Ascending aorta (tissue), 2 donors: ENCODE measurements at regions of chr3 and their contacts with region 1.

Region 1: DNA sequence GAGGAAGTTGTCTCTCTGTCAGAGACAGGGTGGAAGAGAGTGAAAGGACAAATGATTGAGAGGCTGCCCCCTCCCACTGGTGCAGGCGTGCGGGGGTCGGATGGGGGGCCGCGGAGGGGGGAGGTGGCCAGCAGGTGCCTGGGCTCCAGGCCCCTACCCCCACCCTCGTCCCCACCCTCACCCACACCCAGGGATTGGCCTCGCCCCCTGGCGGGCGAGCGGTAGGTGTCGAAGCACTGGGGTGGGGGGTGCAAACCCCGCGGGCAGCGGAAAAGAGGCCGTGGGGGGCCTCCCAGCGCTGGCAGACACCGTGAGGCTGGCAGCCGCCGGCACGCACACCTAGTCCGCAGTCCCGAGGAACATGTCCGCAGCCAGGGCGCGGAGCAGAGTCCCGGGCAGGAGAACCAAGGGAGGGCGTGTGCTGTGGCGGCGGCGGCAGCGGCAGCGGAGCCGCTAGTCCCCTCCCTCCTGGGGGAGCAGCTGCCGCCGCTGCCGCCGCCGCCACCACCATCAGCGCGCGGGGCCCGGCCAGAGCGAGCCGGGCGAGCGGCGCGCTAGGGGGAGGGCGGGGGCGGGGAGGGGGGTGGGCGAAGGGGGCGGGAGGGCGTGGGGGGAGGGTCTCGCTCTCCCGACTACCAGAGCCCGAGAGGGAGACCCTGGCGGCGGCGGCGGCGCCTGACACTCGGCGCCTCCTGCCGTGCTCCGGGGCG is at the start of gene KAT2B:
- DNase-seq: peak in 1 of 2 donors; percentile 87
- H3K4me3 ChIP-seq: peak within 1 kb of the TSS; percentile 74 to 88
- H3K27ac ChIP-seq: peak within 1 kb of the TSS; percentile 96 to 97
- H3K4me1 ChIP-seq: peaks cover 8 to 32% of the 10 kb centered on the region in 2 donors
- H3K27me3 ChIP-seq: no peaks in the 10 kb centered on the region
- CTCF ChIP-seq: peak; percentile 39 to 81 (median 77)
- total RNA-seq, gene KAT2B: 10.5 TPM

Region 2: DNA sequence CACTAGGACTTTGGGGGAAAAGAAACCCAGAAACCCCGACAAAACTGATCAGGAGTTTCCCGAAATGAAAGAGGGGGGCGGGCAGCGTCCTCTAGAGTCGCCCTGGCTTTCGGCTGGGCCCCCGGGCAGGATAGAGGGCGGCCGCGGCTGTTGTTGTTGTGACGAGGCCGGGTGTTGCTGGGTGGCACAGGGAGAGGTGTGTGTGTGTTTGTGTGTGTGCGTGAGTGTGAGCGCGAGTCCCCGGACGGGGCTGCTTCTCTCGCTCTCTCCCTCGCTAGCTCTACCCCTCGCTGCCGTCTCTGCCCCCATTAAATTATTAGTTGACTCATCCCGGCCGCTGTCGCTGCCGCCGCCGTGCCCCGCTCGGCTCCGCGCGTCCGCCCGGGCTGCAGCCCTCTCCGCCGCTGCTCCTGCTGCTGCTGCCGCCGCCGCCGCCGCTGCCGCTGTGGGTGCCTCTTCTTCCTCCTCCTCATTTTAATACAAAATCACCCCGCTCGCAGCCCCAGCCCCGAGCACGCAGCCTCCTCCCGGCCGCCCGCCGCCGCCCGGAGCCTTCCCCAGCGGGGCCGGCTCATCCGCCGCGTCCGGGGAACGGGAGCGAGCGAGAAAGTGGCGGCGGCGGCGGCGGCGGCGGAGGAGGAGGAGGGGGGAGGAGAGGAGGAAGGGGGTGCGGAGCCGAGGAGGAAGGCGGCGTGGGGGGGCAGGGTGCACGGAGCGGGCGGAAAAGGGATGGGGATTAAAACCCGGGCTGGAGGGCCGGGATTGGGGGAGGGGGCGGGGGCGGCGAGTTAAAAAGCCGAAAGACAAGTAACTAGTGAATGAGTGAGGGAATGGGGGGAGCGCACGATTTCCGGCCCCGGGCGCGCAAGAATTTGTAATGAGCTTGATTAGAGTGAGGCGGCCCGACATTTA is 1614.9 kb before region 1 on chr3 and contains the start of gene SATB1:
- intact Hi-C with region 1: loop called (anchors 10 kb)
- DNase-seq: peak; percentile 27 to 86
- H3K4me3 ChIP-seq: peak within 1 kb of the TSS; percentile 76 to 78
- H3K27ac ChIP-seq: peak within 1 kb of the TSS; percentile 74 to 83
- H3K4me1 ChIP-seq: peaks cover 0 to 8% of the 10 kb centered on the region in 2 donors
- H3K27me3 ChIP-seq: no peaks in the 10 kb centered on the region
- CTCF ChIP-seq: no peak
- total RNA-seq, gene SATB1: 7.7 TPM

Region 3: DNA sequence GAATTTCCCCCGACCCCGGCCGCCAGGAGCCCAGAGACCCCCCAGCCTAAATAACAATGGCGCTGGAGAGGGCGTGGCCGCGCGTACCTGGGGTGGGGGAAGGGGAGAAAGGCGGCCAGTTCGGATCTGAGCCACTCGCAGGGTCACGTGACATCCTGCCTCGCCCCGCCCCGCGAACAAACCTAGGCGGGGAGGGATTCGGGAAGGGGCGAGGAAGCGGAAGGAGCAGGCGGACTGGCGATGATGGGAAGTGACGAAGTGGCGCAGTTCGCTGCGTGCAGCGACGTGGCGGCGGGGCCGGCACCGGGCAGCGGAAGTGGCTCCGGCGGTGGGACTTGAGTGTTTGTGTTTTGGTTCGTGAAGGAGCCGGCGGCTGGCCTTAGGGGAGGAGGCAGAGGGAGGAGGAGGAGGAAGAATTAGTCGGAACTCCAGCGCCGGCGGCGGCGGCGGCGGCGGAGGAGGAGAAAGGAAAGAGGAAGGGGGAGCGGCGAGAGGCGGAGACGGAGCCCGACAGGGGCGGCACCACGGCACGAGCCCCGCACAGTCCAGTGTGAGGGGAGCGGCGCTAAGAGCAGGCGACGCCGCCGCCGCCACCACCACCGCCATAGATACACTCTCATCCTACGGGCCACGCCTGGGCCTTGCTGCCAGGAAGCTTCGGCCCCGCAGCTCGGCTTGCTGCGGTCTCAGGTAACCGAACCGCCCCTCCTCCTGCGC is 92.9 kb before region 1 on chr3 and contains the start of gene RAB5A:
- intact Hi-C with region 1: loop called (anchors 1 kb)
- DNase-seq: peak; percentile 95 to 99
- H3K4me3 ChIP-seq: peak within 1 kb of the TSS; percentile 94 to 99
- H3K27ac ChIP-seq: peak within 1 kb of the TSS; percentile 100
- H3K4me1 ChIP-seq: peaks cover 10 to 21% of the 10 kb centered on the region in 2 donors
- H3K27me3 ChIP-seq: no peaks in the 10 kb centered on the region
- CTCF ChIP-seq: no peak
- total RNA-seq, gene RAB5A: 54.9 TPM

Region 4: GRCh38 chr3:20074226-20075063 is 34.5 kb after region 1 on chr3:
- intact Hi-C with region 1: loop called (anchors 5 kb)
- DNase-seq: no peak
- H3K4me3 ChIP-seq: no peak overlapping the region
- H3K27ac ChIP-seq: no peak overlapping the region
- H3K4me1 ChIP-seq: no peaks in the 10 kb centered on the region
- H3K27me3 ChIP-seq: no peaks in the 10 kb centered on the region
- CTCF ChIP-seq: no peak

Region 5: DNA sequence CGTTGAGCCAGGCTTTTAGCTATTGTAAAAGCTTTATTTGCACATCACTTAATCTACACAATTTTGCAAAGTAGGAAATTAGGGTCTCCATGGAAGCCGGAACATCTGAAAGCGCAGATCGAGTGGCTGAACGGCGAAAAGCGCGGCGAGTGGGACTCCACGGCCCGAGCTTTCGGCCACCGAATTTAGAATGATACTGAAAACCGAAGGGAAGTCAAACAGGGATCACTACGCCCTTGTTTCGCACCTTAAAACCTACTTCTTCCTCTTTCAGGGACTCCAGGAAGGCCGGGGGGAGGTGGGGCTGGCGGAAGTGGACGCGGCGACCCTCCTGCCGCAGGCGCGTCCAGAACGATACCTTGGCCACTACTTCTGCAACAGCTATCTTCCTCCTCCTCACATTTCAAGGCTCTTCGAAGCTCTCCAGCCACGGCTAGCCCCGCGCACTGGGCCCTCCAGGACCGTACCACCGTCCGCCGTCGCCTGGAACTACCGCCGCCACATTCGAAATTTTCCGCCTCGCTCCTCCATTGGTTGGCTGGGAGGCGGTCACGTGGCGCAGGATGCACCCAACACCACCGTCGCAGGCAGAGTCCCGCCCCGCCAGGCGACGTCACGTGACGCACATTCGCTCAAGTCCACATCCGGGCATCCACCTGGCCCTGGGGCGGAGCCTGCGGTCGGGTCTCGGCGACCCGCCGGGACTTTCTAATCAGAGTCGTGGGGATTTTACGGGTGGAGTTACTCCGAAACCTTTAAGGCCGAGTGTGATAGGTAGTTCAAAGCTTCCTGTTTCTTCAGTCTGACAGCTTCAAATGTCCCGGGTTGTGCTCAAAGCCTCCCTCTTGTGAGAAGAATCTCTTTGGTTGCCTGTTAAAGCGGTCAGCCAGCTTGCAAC is 146.0 kb after region 1 on chr3 and contains the start of gene SGO1:
- intact Hi-C with region 1: loop called (anchors 2 kb)
- DNase-seq: peak; percentile 99 to 100
- H3K4me3 ChIP-seq: peak within 1 kb of the TSS; percentile 70 to 85
- H3K27ac ChIP-seq: peak within 1 kb of the TSS; percentile 91 to 94
- H3K4me1 ChIP-seq: peaks cover 0 to 6% of the 10 kb centered on the region in 2 donors
- H3K27me3 ChIP-seq: no peaks in the 10 kb centered on the region
- CTCF ChIP-seq: no peak
- total RNA-seq, gene SGO1: not detected